Gastrocnemius medialis (tissue), 4 donors: ENCODE measurements at regions of chr3 and their contacts with region 1.

Region 1: GRCh38 chr3:119676771-119677640 is at the start of gene COX17:
- DNase-seq: peak; percentile 94 to 97
- ATAC-seq: peak; percentile 95 to 96
- H3K4me3 ChIP-seq: peak within 1 kb of the TSS; percentile 72 to 86 (median 78)
- H3K27ac ChIP-seq: peak within 1 kb of the TSS; percentile 89 to 97 (median 96)
- H3K4me1 ChIP-seq: peaks cover 19% of the 10 kb centered on the region in 2 donors
- H3K27me3 ChIP-seq: no peaks in the 10 kb centered on the region
- CTCF ChIP-seq: no peak
- POLR2A ChIP-seq: peak; percentile 77 to 80
- total RNA-seq, gene COX17: 63.4 to 146 (median 87.5) TPM

Region 2: DNA sequence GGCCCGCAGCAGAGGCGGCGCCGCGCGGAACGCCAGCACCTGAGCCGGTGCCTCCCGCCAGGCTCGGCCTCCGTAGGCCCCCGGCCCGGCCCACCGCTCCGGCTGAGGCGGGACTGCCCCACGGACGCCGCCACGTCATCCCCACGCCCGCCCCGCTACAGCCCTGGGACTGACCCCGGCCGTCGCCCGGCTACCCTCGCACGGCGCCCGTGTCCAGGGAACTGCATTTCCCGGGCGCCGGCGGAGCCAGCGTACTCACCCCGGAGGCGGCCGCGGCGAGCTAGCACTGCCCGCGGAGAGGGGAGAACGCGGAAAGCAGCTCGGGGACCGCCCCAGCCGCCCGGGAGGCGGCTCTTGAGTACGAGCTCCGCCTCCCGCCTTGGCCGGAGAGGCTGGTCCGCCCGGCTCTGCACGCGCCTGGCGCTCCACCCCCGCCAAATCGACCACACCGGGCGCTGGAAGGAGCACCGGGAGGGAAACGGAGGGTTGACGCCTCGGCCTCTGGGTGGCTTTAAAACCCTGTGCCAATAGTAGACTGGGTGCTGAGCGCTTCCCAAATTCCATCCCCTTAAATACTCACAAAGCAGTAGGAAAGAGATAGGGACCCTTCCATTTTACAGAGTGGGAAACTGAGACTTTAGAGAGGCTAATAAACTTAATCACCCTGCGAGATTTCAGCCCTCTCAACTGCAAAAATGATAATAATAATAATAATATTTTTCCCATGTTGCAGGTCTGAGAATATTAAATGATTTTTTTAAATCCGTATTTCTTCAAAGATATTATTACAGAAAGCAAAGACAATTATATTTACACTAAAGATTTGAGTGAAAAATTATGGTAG is 436.2 kb before region 1 on chr3 and contains the start of gene B4GALT4:
- in situ Hi-C with region 1: no loop called
- intact Hi-C with region 1: loop called (anchors 10 kb)
- DNase-seq: peak; percentile 72 to 74
- ATAC-seq: peak; percentile 89 to 95
- H3K4me3 ChIP-seq: peak within 1 kb of the TSS; percentile 67 to 82 (median 70)
- H3K27ac ChIP-seq: peak within 1 kb of the TSS; percentile 77 to 89 (median 86)
- H3K4me1 ChIP-seq: peaks cover 0 to 22% of the 10 kb centered on the region in 2 donors
- H3K27me3 ChIP-seq: no peaks in the 10 kb centered on the region
- CTCF ChIP-seq: peak in 1 of 5 experiments; percentile 10
- POLR2A ChIP-seq: peak; percentile 71 to 79
- total RNA-seq, gene B4GALT4: 5.7 to 13.4 (median 7.7) TPM

Region 3: DNA sequence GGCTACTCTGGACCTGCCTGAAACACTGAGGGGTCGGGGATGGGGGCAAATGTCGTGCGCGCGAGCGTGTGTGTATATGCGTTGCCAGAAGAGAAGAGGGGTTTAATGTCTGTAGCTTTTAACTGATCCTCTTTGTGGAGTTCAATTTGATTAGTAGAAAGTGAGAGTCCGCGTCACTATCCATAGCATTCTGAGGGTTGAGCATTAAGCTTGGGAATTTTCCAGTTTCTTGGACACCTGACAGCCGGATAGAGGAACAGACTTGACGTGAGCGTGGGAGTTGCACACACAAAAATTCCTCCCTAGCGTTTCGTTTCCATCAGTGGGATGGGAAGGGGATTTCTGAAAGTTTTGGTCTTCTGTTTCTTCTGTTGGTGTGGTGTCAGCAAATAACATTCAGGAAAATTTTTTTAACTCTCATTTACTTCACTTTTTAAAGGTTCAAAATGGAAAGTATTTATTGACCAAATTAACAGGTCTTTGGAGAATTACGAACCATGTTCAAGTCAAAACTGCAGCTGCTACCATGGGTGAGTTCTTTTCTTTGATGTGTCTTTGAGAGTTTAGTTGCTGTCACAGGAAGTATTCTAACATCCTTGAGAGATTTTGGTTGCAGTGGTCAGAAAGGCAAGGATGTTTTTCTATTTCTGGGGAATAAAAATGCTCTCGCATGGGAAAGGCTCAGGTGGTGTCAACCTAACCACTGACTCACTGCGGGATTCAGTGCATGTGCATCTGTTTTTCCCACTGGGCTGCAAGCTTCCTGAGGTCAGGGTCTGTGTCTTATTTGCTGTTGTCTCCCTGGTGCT is 207.4 kb before region 1 on chr3:
- in situ Hi-C with region 1: no loop called
- intact Hi-C with region 1: loop called (anchors 1 kb)
- DNase-seq: no peak
- ATAC-seq: peak in 1 of 2 donors; percentile 3
- H3K4me3 ChIP-seq: peak overlapping the region; percentile 87 to 99 (median 93)
- H3K27ac ChIP-seq: peak overlapping the region; percentile 83 to 87 (median 84)
- H3K4me1 ChIP-seq: peaks cover 8 to 15% of the 10 kb centered on the region in 2 donors
- H3K27me3 ChIP-seq: no peaks in the 10 kb centered on the region
- CTCF ChIP-seq: no peak
- POLR2A ChIP-seq: no peak

Region 4: GRCh38 chr3:119524931-119525662 is 151.9 kb before region 1 on chr3:
- in situ Hi-C with region 1: loop called in 3 of 4 experiments (anchors 25 kb)
- intact Hi-C with region 1: loop called (anchors 2 kb)
- DNase-seq: no peak
- ATAC-seq: peak; percentile 63 to 64
- H3K4me3 ChIP-seq: no peak overlapping the region
- H3K27ac ChIP-seq: peak overlapping the region in 1 of 4 donors; percentile 28
- H3K4me1 ChIP-seq: no peaks in the 10 kb centered on the region
- H3K27me3 ChIP-seq: no peaks in the 10 kb centered on the region
- CTCF ChIP-seq: peak; percentile 9 to 50 (median 26)
- POLR2A ChIP-seq: no peak

Region 5: GRCh38 chr3:119569156-119569555 is 107.8 kb before region 1 on chr3:
- in situ Hi-C with region 1: no loop called
- intact Hi-C with region 1: no loop called
- DNase-seq: no peak
- ATAC-seq: no peak
- H3K4me3 ChIP-seq: no peak overlapping the region
- H3K27ac ChIP-seq: no peak overlapping the region
- H3K4me1 ChIP-seq: peaks cover 0 to 4% of the 10 kb centered on the region in 2 donors
- H3K27me3 ChIP-seq: no peaks in the 10 kb centered on the region
- CTCF ChIP-seq: no peak
- POLR2A ChIP-seq: no peak

Region 6: GRCh38 chr3:119598410-119599098 is 78.5 kb before region 1 on chr3:
- in situ Hi-C with region 1: no loop called
- intact Hi-C with region 1: loop called (anchors 5 kb)
- DNase-seq: no peak
- ATAC-seq: no peak
- H3K4me3 ChIP-seq: no peak overlapping the region
- H3K27ac ChIP-seq: peak overlapping the region; percentile 80 to 90 (median 87)
- H3K4me1 ChIP-seq: peaks cover 40 to 46% of the 10 kb centered on the region in 2 donors
- H3K27me3 ChIP-seq: no peaks in the 10 kb centered on the region
- CTCF ChIP-seq: no peak
- POLR2A ChIP-seq: no peak

Region 7: DNA sequence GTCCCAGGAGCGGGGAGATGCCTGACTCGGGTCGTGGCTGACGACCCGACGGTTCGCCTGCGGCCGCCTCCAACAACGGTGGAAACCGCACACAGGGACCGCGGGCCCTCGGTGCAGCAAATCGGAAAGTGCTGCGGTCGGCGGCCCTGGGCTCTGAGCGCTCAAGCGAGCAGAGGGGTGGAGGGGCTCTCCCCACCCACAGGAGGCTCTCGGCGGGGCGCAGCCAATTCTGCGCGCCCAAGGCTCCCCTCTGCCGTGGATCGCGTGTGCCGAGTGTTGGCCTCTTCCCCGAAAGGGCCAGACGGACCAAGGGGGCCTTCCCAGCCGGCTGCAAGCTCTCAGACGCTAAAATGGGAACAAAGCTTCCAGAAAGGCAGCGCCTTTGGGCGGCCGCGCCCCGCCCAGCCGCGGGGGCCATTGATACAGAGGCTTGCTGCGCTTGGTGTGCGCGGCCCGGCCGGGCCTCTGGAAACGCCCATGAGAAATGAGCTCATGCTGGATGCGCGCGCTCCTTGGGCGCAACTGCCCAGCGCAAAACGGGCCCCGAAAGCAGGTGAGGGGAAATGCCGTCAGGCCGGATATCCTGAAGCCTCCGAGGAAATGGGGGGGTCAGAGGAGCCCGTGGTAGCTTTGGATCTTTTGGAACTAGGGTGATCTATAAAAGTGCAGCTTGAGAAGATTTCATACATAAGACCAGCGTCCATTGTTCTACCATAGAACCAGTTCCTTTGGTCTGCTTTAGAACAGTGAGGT is 418.4 kb after region 1 on chr3:
- in situ Hi-C with region 1: loop called in 1 of 4 experiments (anchors 25 kb)
- intact Hi-C with region 1: loop called (anchors 1 kb)
- DNase-seq: peak; percentile 74 to 87
- ATAC-seq: peak; percentile 34 to 37
- H3K4me3 ChIP-seq: peak overlapping the region; percentile 65 to 94 (median 90)
- H3K27ac ChIP-seq: peak overlapping the region; percentile 90 to 99 (median 98)
- H3K4me1 ChIP-seq: peaks cover 20 to 31% of the 10 kb centered on the region in 2 donors
- H3K27me3 ChIP-seq: no peaks in the 10 kb centered on the region
- CTCF ChIP-seq: peak in 1 of 5 experiments; percentile 3
- POLR2A ChIP-seq: peak; percentile 81 to 92

Region 8: DNA sequence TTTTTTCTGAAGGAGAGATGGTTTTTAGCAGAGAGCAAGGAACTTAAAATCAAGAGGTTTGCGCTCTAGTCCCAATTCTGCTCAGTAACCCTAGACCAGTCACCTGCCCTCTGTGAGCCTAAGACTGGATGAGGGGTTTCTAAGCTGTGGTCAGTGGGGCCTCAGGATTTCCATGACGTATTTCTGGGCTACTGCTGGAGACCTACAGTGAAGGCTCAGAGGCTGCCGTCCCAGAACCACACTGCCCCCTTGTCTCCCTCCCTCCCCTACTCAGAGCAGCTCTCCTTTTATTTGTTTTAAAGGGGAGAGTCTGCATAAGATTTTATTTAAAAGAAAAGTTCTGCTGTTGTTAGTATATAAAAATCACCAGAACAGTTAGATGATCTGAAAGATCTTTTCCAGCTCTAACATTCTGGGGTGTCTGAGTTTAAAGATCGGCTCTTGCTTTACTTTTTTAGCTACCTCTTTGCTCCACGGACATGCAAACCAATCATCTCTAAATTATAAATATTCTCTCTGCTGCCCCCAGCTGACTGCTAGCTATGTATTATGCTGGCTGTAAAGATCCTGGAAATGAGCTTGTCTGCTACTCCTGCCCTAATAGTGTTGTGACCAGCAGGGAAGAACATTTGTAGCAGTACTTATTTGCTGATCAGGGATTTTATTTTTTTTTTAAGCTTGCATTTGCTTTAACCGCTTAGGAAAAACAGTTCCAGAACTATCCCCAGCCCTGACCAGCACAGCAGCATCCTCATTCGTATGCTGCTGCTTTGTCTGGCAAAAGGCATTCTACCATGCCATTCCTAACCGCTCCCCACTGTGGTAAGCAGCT is 890.6 kb after region 1 on chr3:
- in situ Hi-C with region 1: no loop called
- intact Hi-C with region 1: no loop called
- DNase-seq: no peak
- ATAC-seq: peak in 1 of 2 donors; percentile 44
- H3K4me3 ChIP-seq: peak overlapping the region in 2 of 4 donors; percentile 1 to 35
- H3K27ac ChIP-seq: no peak overlapping the region
- H3K4me1 ChIP-seq: no peaks in the 10 kb centered on the region
- H3K27me3 ChIP-seq: no peaks in the 10 kb centered on the region
- CTCF ChIP-seq: peak in 1 of 5 experiments; percentile 16
- POLR2A ChIP-seq: no peak